MCF 10A (cell line): ENCODE measurements at regions of chr10 and their contacts with region 1.

Region 1: DNA sequence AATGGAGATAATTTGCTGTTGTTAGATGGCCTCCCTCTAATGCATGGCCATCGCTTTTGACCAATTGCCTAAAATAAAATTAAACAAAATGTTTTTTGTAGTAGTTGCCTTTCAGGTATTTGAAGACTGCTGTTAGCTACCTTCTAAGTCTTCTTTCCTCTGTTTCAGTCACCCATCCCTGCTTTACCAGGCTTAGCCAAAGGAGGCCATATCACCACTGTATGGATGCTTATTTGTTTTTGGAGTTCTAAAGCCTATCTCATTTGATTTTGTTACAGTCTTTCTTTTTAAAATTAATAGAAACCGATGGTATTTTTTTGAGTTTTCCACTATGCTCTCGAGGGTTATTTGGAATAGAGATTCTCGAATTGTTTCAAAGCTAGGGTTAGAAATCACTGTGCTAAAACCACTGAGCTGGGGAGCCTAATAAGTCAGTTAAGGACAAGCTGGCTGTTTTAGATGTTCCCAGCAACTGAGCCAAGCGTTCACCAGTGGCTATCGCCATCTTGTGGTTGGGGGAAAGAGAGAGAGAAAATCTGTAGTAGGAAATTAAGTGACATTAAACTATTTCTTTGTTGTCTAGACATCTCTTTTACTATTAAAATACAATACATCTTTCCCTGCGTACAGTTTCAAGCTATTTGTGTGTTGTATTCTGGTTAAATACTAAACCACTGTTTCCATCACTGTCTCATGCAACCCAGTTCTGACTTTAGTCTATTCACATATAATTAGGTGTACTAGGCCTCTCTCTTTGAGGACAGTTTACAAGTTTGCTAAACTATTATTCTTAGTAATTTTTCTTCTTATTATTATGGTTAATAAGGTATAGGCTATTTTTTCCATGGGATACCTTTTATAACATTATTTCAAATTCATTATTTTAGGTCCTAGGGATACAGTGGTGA is 52.2 kb downstream of the GPR158 start:
- DNase-seq: peak; percentile 65
- H3K4me3 Mint-ChIP-seq: no peak overlapping the region
- H3K27ac Mint-ChIP-seq: no peak overlapping the region
- H3K4me1 Mint-ChIP-seq: no peaks in the 10 kb centered on the region
- H3K27me3 Mint-ChIP-seq: peaks cover 24% of the 10 kb centered on the region
- CTCF ChIP-seq: peak; percentile 69

Region 2: GRCh38 chr10:25026463-25026862 is 200.6 kb before region 1 on chr10:
- CTCF ChIA-PET with region 1: interaction called, 3 read pairs
- POLR2A ChIA-PET with region 1: interaction called, 4 read pairs
- intact Hi-C with region 1: loop called (anchors 1 kb)
- DNase-seq: peak; percentile 34
- H3K4me3 Mint-ChIP-seq: no peak overlapping the region
- H3K27ac Mint-ChIP-seq: no peak overlapping the region
- H3K4me1 Mint-ChIP-seq: no peaks in the 10 kb centered on the region
- H3K27me3 Mint-ChIP-seq: no peaks in the 10 kb centered on the region
- CTCF ChIP-seq: peak; percentile 32

Region 3: DNA sequence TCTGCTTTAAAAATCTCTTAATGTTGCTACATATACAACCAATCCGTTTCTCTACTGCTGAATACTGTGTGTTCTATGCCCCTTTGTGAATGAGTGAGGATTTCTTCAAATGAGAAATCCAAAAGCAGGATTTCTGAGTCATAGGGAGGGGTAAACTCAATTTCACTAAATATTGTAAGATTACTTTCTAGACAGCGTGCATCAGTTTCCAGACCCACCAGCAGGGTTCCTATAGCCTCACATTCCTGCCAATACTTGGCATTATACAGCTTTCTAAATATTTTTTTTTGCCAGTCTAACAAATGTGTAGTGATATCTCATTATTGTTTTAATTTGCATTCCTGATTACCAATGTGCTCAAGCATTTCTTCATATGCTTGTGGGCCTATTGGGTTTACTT is 16.8 kb before region 1 on chr10:
- CTCF ChIA-PET with region 1: interaction called, 13 read pairs
- POLR2A ChIA-PET with region 1: no interaction called
- intact Hi-C with region 1: no loop called
- DNase-seq: no peak
- H3K4me3 Mint-ChIP-seq: no peak overlapping the region
- H3K27ac Mint-ChIP-seq: no peak overlapping the region
- H3K4me1 Mint-ChIP-seq: no peaks in the 10 kb centered on the region
- H3K27me3 Mint-ChIP-seq: peaks cover 43% of the 10 kb centered on the region
- CTCF ChIP-seq: no peak

Region 4: DNA sequence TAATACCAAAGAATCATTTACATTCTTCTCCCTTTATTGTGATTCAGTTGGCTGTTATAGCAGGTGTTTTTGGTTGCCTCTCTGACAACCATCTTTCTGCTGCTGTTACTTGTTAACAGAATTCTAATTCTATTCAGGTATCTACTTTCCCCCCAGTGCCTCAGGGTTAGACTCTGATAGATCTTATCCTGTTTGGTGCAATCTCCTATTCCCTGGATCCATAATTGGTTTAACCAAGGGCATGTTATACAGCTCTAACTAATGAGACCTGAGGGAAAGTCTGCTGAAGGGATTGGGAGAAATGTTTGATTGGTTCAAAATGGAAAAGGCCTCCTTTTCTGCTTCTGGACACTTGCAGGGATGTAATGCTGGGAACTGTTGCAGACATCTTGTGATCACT is 109.3 kb after region 1 on chr10:
- CTCF ChIA-PET with region 1: no interaction called
- POLR2A ChIA-PET with region 1: no interaction called
- intact Hi-C with region 1: no loop called
- DNase-seq: no peak
- H3K4me3 Mint-ChIP-seq: no peak overlapping the region
- H3K27ac Mint-ChIP-seq: no peak overlapping the region
- H3K4me1 Mint-ChIP-seq: no peaks in the 10 kb centered on the region
- H3K27me3 Mint-ChIP-seq: peaks cover 68% of the 10 kb centered on the region
- CTCF ChIP-seq: no peak

Region 5: GRCh38 chr10:25682203-25682851 is 455.3 kb after region 1 on chr10:
- CTCF ChIA-PET with region 1: no interaction called
- POLR2A ChIA-PET with region 1: no interaction called
- intact Hi-C with region 1: loop called (anchors 10 kb)
- DNase-seq: peak; percentile 25
- H3K4me3 Mint-ChIP-seq: peak overlapping the region; percentile 55
- H3K27ac Mint-ChIP-seq: no peak overlapping the region
- H3K4me1 Mint-ChIP-seq: peaks cover 11% of the 10 kb centered on the region
- H3K27me3 Mint-ChIP-seq: peaks cover 28% of the 10 kb centered on the region
- CTCF ChIP-seq: peak; percentile 36